WTC11 (cell line): ENCODE measurements at regions of chr2 and their contacts with region 1.

Region 1: DNA sequence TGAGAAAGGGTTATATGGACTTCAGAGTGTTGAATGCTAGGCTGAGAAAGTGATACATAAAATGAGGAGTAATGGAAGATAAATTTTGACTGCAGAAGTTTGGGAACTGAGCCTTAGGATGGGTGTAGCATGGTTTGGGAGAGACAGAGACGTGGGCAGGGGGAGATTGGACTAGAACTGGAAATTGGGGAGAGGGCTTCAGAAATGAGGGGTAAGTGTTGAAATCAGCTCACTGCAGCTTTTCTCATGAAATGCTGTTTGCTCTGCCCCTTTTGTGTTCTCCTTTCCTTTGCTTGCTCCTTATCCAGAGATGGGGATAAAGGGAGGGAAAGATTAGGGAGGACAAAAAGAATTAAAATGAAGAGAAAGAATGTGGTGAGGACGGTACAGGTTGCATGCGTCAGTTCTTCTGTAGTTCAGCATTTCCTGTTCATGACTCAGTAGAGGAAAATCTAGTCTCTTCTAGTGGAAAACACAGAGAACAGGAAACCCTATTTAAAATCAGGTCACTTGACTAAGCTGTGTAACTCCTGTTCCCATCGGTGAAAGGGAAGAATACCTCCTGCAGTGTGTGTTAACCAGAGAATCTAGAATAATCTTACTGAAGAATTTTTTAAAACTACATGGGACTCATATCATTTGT is 105.6 kb downstream of the CRIM1 start:
- DNase-seq: no peak
- ATAC-seq: peak; percentile 53
- H3K4me3 Mint-ChIP-seq: no peak overlapping the region
- H3K27ac Mint-ChIP-seq: no peak overlapping the region
- H3K4me1 Mint-ChIP-seq: no peaks in the 10 kb centered on the region; the same call in none of the 2 replicates
- H3K27me3 Mint-ChIP-seq: no peaks in the 10 kb centered on the region
- CTCF ChIP-seq: no peak

Region 2: DNA sequence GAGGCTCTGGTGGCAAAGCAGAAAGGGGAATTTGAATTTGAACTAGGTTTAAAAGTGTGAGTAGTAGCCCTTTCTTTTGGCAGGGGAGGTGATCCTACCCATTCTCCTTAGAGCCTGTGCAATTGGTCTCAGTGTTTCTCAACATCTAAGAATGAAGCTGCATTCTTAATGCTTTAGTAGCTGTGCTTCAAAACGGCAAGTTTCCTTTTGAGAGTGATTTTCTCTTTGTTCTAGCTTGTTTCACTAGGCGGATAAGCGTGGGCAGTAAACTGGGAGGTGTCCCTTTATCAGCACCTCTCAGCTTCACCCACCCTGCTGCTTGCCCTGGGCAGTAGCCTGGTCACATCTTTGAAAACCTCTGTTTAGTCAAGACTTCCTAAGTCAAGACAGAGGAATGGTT is 98.9 kb before region 1 on chr2:
- CTCF ChIA-PET with region 1: interaction called, 62 read pairs
- POLR2A ChIA-PET with region 1: interaction called, 4 read pairs
- DNase-seq: no peak
- ATAC-seq: no peak
- H3K4me3 Mint-ChIP-seq: no peak overlapping the region
- H3K27ac Mint-ChIP-seq: no peak overlapping the region
- H3K4me1 Mint-ChIP-seq: peaks cover 94% of the 10 kb centered on the region
- H3K27me3 Mint-ChIP-seq: peaks cover under 1% of the 10 kb centered on the region; the same call in 1 of the 2 replicates
- CTCF ChIP-seq: no peak

Region 3: GRCh38 chr2:36376319-36376765 is 84.8 kb before region 1 on chr2:
- CTCF ChIA-PET with region 1: interaction called, 22 read pairs
- POLR2A ChIA-PET with region 1: no interaction called
- DNase-seq: no peak
- ATAC-seq: peak; percentile 45
- H3K4me3 Mint-ChIP-seq: peak overlapping the region; percentile 40
- H3K27ac Mint-ChIP-seq: peak overlapping the region; percentile 86
- H3K4me1 Mint-ChIP-seq: peaks cover 91% of the 10 kb centered on the region
- H3K27me3 Mint-ChIP-seq: no peaks in the 10 kb centered on the region
- CTCF ChIP-seq: no peak

Region 4: GRCh38 chr2:36408198-36408703 is 52.9 kb before region 1 on chr2:
- CTCF ChIA-PET with region 1: interaction called, 10 read pairs
- POLR2A ChIA-PET with region 1: no interaction called
- DNase-seq: peak; percentile 64
- ATAC-seq: peak; percentile 75
- H3K4me3 Mint-ChIP-seq: no peak overlapping the region
- H3K27ac Mint-ChIP-seq: 0 out of 2 replicates have a peak overlapping the region, but pooled peaks have one; percentile 11
- H3K4me1 Mint-ChIP-seq: peaks cover 73% of the 10 kb centered on the region
- H3K27me3 Mint-ChIP-seq: no peaks in the 10 kb centered on the region
- CTCF ChIP-seq: no peak

Region 5: GRCh38 chr2:36433311-36434217 is 27.6 kb before region 1 on chr2:
- CTCF ChIA-PET with region 1: interaction called, 12 read pairs
- POLR2A ChIA-PET with region 1: no interaction called
- DNase-seq: no peak
- ATAC-seq: peak; percentile 31
- H3K4me3 Mint-ChIP-seq: no peak overlapping the region
- H3K27ac Mint-ChIP-seq: no peak overlapping the region
- H3K4me1 Mint-ChIP-seq: peaks cover 24% of the 10 kb centered on the region
- H3K27me3 Mint-ChIP-seq: no peaks in the 10 kb centered on the region
- CTCF ChIP-seq: no peak

Region 6: GRCh38 chr2:36478332-36478738 is 17.2 kb after region 1 on chr2:
- CTCF ChIA-PET with region 1: no interaction called
- POLR2A ChIA-PET with region 1: no interaction called
- DNase-seq: no peak
- ATAC-seq: no peak
- H3K4me3 Mint-ChIP-seq: no peak overlapping the region
- H3K27ac Mint-ChIP-seq: peak overlapping the region; percentile 30; the same call in 1 of the 2 replicates
- H3K4me1 Mint-ChIP-seq: peaks cover 21% of the 10 kb centered on the region
- H3K27me3 Mint-ChIP-seq: no peaks in the 10 kb centered on the region
- CTCF ChIP-seq: no peak

Region 7: GRCh38 chr2:36539631-36540030 is 78.5 kb after region 1 on chr2:
- CTCF ChIA-PET with region 1: no interaction called
- POLR2A ChIA-PET with region 1: no interaction called
- DNase-seq: no peak
- ATAC-seq: no peak
- H3K4me3 Mint-ChIP-seq: no peak overlapping the region
- H3K27ac Mint-ChIP-seq: no peak overlapping the region
- H3K4me1 Mint-ChIP-seq: no peaks in the 10 kb centered on the region
- H3K27me3 Mint-ChIP-seq: no peaks in the 10 kb centered on the region
- CTCF ChIP-seq: no peak

Region 8: DNA sequence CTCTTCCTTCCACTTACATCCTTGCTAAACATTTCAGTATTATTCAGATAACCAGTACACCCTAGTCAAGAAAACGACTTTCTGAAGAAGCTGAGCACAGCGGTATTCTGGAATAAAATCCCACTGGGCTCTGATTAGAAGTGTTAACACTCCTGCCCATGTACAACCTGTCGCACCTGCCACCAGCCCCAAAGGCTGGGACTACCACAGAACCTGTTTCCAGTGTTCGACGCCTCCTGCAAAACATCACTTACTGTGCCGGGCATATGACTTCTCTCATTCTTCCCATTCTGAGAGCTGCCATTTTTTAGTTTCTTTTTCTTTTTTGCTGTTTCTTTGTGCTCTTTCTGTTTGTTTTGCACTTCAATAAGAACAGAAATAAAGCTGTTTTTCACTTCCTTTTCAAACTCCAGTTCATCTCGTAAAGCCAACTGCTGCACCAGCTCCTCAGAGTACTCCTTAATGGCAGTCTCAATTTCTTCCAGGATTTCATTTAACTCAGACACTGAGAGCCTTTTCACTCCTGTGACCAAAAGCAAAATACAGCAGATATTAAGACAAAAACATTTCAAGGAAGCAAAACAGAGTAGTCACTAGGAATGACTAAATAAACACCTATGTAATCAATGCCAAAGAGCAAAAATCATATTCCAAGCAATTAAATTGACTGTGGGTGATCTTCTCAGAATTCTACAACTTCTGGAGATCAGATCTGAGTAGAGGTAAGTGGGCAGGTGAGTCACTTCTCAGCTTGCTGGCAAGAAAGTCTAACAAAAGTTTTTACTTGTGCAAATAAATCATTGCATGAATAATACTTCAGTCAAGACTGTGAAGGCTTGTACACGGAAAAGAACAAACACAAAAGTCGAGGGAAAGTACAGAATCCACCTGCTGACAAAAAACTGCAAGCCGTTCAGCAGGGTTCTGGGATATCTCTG is 117.5 kb after region 1 on chr2:
- CTCF ChIA-PET with region 1: no interaction called
- POLR2A ChIA-PET with region 1: no interaction called
- DNase-seq: no peak
- ATAC-seq: no peak
- H3K4me3 Mint-ChIP-seq: no peak overlapping the region
- H3K27ac Mint-ChIP-seq: no peak overlapping the region
- H3K4me1 Mint-ChIP-seq: no peaks in the 10 kb centered on the region
- H3K27me3 Mint-ChIP-seq: no peaks in the 10 kb centered on the region
- CTCF ChIP-seq: no peak